ENCODE measurements at regions of chr7 and their contacts with region 1.

Region 1: GRCh38 chr7:16982640-16983350 is 101.0 kb upstream of the AGR3 start:
- DNase-seq: no peak
- CTCF ChIP-seq: peak; percentile 74

Region 2: GRCh38 chr7:16804674-16805439 is 177.9 kb before region 1 on chr7 and contains the start of gene AGR2:
- in situ Hi-C with region 1: no loop called
- DNase-seq: no peak
- CTCF ChIP-seq: no peak

Region 3: GRCh38 chr7:17166824-17167379 is 184.1 kb after region 1 on chr7:
- in situ Hi-C with region 1: no loop called
- DNase-seq: no peak
- CTCF ChIP-seq: no peak

Region 4: GRCh38 chr7:17530741-17531417 is 548.1 kb after region 1 on chr7:
- in situ Hi-C with region 1: loop called (anchors 25 kb)
- DNase-seq: peak; percentile 11
- CTCF ChIP-seq: no peak

Region 5: DNA sequence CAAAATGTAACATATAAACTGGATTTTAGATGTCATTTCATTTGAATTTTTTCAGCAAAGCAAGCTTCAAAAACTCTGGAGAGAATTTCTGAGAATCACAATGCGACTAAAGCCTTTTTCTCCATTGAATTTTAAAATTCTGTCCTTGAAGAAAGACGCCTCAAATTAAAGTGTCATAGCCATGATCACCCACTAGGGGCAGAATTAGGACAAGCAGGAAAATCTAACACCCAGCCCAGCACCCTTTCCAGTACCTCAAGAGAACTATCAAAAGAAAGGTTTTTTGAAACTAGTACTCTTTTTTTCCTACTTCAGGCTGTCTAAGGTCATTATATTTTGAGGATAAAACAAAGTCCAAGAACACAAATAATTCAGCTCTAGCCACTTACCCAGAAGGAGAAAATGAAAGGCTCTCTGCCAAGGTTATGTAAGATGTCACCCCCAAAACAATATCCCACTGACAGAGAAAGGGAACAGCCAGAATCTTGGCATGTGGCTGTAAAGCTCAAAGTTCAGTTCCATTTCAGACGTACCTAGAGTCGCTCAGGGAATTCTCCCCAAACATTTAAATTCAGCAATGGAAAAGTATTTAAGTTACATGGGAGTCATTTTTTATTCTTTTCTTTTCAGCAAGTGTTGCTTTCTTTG is 658.1 kb after region 1 on chr7:
- in situ Hi-C with region 1: loop called (anchors 25 kb)
- DNase-seq: peak; percentile 23
- CTCF ChIP-seq: peak; percentile 47

Measured in GM13976 (cell line).